ENCODE measurements at regions of chr22 and their contacts with region 1.

Region 1: DNA sequence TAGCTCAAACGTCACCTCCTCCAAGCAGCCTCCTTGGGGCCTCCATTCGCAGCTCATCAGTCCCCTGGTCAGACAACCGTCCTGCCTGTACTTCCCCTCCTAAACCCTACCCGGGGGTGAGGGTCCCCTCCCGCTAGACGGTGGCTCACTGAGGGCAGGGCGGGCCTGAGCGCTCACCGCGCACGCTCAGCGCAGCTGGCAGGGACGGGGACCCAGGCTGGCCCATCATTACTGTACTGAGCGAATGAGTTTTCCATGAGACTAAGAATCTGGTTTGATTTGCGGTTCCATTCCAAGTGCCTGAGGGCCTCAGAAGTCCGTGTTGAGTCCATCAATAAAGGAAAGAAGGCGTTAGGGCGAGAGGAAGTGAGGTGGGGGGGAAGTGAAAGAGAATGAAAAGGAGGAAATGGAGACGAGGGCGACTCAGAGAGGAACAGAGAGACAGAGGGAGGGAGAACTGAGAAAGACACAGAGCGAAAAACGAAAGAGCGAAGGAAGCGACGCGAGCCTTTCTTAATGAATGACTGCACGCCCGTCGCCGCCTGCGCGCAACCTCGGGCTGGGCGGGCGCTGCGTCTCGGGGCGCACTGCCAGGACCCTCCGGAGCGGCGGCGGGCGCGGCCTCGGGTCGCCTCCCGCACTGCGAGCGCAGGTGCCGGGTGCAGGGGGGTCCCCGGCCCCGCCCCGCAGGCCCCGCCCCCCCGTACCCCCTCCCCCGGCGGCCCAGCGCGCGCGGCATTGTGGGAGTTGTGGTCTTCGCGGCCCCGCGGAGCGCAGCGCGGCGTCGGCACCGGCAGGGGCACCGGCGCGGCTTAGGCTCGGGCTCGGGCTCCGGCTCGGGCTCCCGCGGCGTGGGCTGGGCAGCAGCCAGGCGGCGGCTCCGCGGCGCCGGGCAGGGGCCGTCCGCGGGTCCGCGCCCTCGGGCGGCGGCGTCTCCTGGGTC is at the start of gene ASPHD2:
- DNase-seq: peak; percentile 83
- ATAC-seq: peak; percentile 82
- H3K4me3 Mint-ChIP-seq: peak within 1 kb of the TSS; percentile 92
- H3K27ac Mint-ChIP-seq: peak within 1 kb of the TSS; percentile 98
- H3K4me1 Mint-ChIP-seq: peaks cover 59% of the 10 kb centered on the region
- H3K27me3 Mint-ChIP-seq: no peaks in the 10 kb centered on the region
- CTCF ChIP-seq: no peak
- total RNA-seq, gene ASPHD2: 15.5 TPM in 2 replicates

Region 2: DNA sequence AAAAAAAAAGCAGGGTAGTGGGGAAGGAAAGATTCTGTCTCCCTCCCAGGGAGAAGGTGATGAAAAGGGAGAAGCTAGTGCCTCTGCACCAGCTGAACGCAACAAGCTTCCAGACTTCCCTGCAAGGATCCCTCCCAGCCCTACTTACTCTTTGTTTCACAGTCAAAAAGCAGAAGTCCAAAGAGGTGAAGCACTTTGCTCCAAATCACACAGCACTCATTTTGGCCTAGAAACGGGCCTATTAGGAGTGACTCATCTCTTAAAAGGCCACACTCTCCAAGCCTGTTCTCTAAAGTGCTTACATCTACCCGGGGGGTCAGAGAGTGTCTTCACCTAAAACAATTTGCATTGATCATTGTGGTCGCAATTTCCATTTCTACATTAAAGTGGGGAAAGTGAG is 882.0 kb before region 1 on chr22:
- CTCF ChIA-PET with region 1: no interaction called
- POLR2A ChIA-PET with region 1: interaction called, 10 read pairs
- intact Hi-C with region 1: no loop called
- DNase-seq: no peak
- ATAC-seq: peak; percentile 55
- H3K4me3 Mint-ChIP-seq: no peak overlapping the region
- H3K27ac Mint-ChIP-seq: no peak overlapping the region
- H3K4me1 Mint-ChIP-seq: peaks cover 46% of the 10 kb centered on the region
- H3K27me3 Mint-ChIP-seq: no peaks in the 10 kb centered on the region
- CTCF ChIP-seq: no peak

Region 3: GRCh38 chr22:26398741-26399153 is 30.0 kb before region 1 on chr22:
- CTCF ChIA-PET with region 1: interaction called, 7 read pairs
- POLR2A ChIA-PET with region 1: interaction called, 3 read pairs
- intact Hi-C with region 1: loop called (anchors 1 kb)
- DNase-seq: peak; percentile 21
- ATAC-seq: peak; percentile 77
- H3K4me3 Mint-ChIP-seq: no peak overlapping the region
- H3K27ac Mint-ChIP-seq: no peak overlapping the region
- H3K4me1 Mint-ChIP-seq: peaks cover 5% of the 10 kb centered on the region
- H3K27me3 Mint-ChIP-seq: peaks cover 11% of the 10 kb centered on the region
- CTCF ChIP-seq: peak; percentile 47

Region 4: DNA sequence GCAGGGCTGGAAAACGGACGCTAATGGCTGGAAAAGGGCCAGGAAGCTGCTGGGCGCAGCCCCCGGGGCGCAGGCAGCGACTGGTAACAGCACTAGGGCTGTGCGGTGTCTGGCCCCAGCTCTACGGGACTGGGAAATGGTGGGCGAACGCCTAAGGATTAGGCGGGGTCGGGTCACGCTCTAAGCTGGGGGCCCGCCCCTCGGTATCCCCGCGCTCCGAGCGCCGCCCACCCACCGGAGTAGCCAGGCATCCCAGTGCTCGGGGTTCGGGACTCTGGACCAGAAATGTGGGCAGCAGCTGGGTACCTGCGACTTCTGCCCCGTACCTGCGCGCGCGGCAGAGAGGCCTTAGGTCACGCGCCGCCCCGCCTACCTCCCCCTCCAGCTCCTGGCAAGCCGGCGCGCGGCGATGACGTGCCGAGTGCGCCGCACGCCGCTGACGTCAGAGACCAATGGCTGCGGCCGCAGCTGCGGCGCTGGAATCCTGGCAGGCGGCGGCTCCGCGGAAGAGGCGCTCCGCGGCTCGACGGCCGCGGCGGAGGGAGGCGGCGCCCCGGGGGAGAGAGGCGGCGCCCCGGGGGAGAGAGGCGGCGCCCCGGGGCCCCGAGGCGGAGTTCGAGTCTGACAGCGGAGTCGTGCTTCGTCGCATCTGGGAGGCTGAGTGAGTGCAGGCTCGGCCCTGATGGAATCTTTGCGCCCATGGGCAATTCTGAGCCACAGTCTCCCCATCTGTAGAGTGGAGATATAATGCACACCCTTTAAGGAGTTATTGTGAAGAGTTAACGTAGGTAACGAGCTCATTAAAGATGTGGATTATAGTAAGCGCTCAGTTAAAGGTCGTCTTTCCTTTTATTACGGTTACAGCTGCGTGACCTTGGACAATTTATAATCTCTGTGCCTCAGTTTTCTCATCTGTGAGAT is 54.9 kb after region 1 on chr22 and contains the starts of genes HPS4 and SRRD:
- CTCF ChIA-PET with region 1: interaction called, 3 read pairs
- POLR2A ChIA-PET with region 1: interaction called, 7 read pairs
- intact Hi-C with region 1: loop called (anchors 1 kb)
- DNase-seq: peak; percentile 98
- ATAC-seq: peak; percentile 80
- H3K4me3 Mint-ChIP-seq: peak within 1 kb of the TSS; percentile 91
- H3K27ac Mint-ChIP-seq: peak within 1 kb of the TSS; percentile 94
- H3K4me1 Mint-ChIP-seq: peaks cover 67% of the 10 kb centered on the region
- H3K27me3 Mint-ChIP-seq: no peaks in the 10 kb centered on the region
- CTCF ChIP-seq: no peak
- total RNA-seq, gene HPS4: 45.3 and 51.6 TPM in 2 replicates
- total RNA-seq, gene SRRD: 26.4 and 32.0 TPM in 2 replicates

Region 5: DNA sequence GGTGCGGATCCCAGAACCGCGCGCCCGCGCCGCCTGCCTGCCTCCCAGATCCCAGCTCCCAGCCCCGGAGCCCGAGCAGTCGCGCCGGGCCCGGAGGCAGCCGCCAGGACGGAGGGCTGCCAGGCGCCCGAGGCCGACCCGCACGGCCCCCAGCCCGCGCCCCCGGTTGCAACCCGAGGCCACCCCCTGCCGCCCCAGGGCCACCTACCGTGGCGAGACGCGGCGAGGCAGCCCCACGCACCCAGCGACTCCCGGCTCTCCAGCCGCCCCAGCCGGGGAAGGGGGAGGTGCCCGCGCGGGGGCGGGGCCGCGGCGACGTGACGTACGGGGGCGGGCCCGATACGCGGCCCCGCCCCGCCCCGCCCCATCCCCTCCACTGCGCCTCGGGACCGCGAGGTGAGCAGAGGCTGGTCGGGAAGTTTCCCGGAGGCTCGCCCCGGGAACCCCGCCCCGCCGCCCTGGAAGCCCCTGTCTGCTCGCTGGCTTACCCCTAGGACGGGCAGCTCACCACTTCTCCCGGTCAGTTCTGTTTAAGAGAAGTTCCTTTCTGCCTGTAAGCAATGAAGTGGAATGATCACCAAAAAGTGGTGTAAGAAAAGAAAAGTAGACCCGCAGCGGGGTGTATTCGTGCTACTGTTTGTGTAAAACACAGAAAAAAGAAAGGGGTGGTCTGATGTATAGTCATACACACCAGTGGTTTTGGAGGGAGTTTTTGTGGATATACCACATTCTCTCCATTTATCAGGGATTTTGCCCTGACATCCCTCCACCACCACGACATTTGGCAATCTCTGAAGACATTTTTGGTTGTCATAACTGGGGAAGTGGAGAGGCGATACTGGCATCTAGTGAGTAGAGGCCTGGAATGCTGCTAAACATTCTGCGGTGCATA is 161.3 kb after region 1 on chr22 and contains the start of gene TPST2:
- CTCF ChIA-PET with region 1: no interaction called
- POLR2A ChIA-PET with region 1: no interaction called
- intact Hi-C with region 1: loop called (anchors 5 kb)
- DNase-seq: peak; percentile 78
- ATAC-seq: peak; percentile 94
- H3K4me3 Mint-ChIP-seq: peak within 1 kb of the TSS; percentile 87
- H3K27ac Mint-ChIP-seq: peak within 1 kb of the TSS; percentile 72
- H3K4me1 Mint-ChIP-seq: peaks cover 39% of the 10 kb centered on the region
- H3K27me3 Mint-ChIP-seq: no peaks in the 10 kb centered on the region
- CTCF ChIP-seq: no peak
- total RNA-seq, gene TPST2: 10.4 and 11.0 TPM in 2 replicates

Region 6: GRCh38 chr22:26672590-26673468 is 244.0 kb after region 1 on chr22:
- CTCF ChIA-PET with region 1: no interaction called
- POLR2A ChIA-PET with region 1: interaction called, 5 read pairs
- intact Hi-C with region 1: loop called (anchors 1 kb)
- DNase-seq: peak; percentile 82
- ATAC-seq: peak; percentile 67
- H3K4me3 Mint-ChIP-seq: peak overlapping the region; percentile 98
- H3K27ac Mint-ChIP-seq: peak overlapping the region; percentile 99
- H3K4me1 Mint-ChIP-seq: peaks cover 92% of the 10 kb centered on the region
- H3K27me3 Mint-ChIP-seq: no peaks in the 10 kb centered on the region
- CTCF ChIP-seq: no peak